GM13977 (cell line): ENCODE measurements at regions of chr14 and their contacts with region 1.

Region 1: DNA sequence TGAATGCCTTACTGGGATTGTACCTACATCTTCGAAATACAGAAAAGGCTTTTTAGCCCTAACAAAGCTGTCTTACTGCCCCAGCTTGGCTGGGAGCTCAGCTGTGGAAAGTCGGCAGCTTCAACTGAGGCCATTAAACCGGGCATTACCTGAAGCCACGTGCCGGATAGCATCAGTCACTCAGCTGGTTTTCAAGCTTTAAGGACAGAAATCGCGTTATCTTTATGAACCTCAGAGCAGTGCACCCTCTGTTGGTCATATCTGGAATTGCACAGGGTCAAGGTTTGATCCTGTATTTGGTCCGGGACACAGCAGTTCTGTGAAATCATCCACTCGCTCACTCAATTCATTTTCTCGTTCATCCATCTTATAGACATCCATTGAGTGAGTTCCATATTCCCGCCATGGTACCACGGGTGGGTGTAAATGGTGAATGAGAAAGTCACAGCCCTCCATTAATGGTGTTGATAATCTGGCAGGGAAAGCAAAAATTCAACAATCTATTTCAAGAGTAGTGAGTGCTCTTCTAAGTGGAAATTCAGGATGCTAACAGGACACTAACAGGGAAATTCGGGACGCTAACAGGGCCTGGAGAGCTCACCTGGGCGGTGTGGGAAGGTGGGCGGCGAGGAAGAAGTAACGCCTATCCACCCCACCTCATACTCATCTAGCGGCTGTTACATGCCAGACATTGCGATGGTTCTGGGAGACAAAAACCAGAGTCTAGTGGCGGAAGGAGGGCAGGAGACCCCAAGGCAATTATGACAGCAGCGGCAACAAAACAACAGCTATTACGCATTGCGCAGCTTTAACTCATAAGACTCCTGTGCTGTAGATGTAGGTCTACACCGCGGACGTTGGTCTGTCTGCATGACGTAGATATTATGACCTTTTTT is 60.6 kb upstream of the TCL1A start:
- DNase-seq: peak; percentile 78
- CTCF ChIP-seq: peak; percentile 87

Region 2: DNA sequence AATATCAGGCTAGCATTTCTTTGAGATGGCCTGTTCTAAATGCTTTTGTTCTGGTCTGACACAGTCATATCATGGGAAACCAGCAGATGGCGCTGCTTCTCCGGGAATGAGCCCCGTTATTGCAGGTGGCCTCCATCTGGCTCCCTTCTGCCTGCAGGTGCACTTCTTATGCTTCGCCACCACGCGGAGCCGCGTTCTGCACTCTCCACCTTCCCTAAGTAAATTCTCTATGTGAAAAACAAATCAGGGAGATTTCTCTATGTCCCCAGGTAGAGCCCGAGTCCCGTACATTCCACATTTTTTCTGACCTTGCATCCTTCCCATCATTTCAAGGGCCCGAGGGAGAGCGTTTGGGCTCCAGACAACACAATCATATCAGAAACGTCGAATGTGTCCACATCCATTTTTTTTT is 213.5 kb before region 1 on chr14:
- in situ Hi-C with region 1: loop called (anchors 10 kb)
- DNase-seq: peak; percentile 86
- CTCF ChIP-seq: peak; percentile 96

Region 3: DNA sequence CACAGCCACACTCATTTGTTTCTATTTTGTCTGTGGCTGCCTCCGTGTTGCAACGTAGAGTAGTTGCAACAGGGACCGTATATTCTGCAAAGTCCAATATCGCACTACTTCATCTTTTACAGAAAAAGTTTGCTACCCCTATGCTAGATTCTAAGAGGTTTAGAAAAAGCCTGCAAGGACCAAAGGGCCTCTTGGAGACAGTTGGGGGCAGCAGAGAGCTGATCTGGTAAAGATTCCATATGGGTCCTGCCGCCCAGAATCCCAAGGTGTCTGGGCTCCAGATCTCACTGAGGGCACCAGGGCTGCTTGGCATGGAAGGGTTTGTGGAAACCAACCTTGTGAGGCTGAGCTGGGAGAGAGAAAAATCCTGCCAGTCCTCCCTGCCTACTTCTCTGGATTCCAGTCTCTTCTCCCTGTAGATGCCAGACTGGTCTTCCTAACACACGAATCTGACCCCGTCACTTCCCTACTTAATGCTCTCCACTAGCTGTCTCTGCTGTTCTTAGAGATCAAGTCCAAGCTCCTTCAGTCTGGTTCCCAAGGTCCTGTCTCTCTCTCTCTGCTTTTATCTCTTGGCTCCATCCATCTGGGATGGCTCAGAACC is 165.0 kb before region 1 on chr14:
- in situ Hi-C with region 1: loop called (anchors 5 kb)
- DNase-seq: peak; percentile 47
- CTCF ChIP-seq: peak; percentile 72